ENCODE measurements at regions of chr3 and their contacts with region 1.

Region 1: GRCh38 chr3:50611464-50612233 is at the start of gene CISH:
- DNase-seq: peak; percentile 86 to 90 (median 88)
- H3K4me3 ChIP-seq: peak within 1 kb of the TSS; percentile 66 to 93 (median 82)
- H3K4me3 Mint-ChIP-seq: peak within 1 kb of the TSS; percentile 93 to 97
- H3K27ac ChIP-seq: peak within 1 kb of the TSS; percentile 69 to 83
- H3K27ac Mint-ChIP-seq: peak within 1 kb of the TSS; percentile 83 to 96 (median 92)
- H3K4me1 ChIP-seq: peaks cover 72 to 86% of the 10 kb centered on the region in 2 donors
- H3K4me1 Mint-ChIP-seq: peaks cover 78% of the 10 kb centered on the region
- H3K27me3 ChIP-seq: no peaks in the 10 kb centered on the region
- H3K27me3 Mint-ChIP-seq: peaks cover 0 to 4% (median 0%) of the 10 kb centered on the region in 3 donors
- CTCF ChIP-seq: no peak
- polyA plus RNA-seq, gene CISH: 2.9 to 20.1 (median 6.2) TPM

Region 2: GRCh38 chr3:50350527-50351322 is 260.9 kb before region 1 on chr3 and contains the starts of genes CYB561D2 and NPRL2:
- intact Hi-C with region 1: loop called (anchors 5 kb)
- DNase-seq: peak; percentile 95 to 97 (median 96)
- H3K4me3 ChIP-seq: peak within 1 kb of the TSS; percentile 79 to 93 (median 85)
- H3K4me3 Mint-ChIP-seq: peak within 1 kb of the TSS; percentile 92 to 95
- H3K27ac ChIP-seq: peak within 1 kb of the TSS; percentile 85 to 94
- H3K27ac Mint-ChIP-seq: peak within 1 kb of the TSS; percentile 95 to 99 (median 97)
- H3K4me1 ChIP-seq: peaks cover 42 to 58% of the 10 kb centered on the region in 2 donors
- H3K4me1 Mint-ChIP-seq: peaks cover 59% of the 10 kb centered on the region
- H3K27me3 ChIP-seq: no peaks in the 10 kb centered on the region
- H3K27me3 Mint-ChIP-seq: no peaks in the 10 kb centered on the region
- CTCF ChIP-seq: no peak
- polyA plus RNA-seq, gene CYB561D2: 78.9 to 94.0 (median 82.5) TPM
- polyA plus RNA-seq, gene NPRL2: 20.9 to 37.9 (median 23.5) TPM

Region 3: DNA sequence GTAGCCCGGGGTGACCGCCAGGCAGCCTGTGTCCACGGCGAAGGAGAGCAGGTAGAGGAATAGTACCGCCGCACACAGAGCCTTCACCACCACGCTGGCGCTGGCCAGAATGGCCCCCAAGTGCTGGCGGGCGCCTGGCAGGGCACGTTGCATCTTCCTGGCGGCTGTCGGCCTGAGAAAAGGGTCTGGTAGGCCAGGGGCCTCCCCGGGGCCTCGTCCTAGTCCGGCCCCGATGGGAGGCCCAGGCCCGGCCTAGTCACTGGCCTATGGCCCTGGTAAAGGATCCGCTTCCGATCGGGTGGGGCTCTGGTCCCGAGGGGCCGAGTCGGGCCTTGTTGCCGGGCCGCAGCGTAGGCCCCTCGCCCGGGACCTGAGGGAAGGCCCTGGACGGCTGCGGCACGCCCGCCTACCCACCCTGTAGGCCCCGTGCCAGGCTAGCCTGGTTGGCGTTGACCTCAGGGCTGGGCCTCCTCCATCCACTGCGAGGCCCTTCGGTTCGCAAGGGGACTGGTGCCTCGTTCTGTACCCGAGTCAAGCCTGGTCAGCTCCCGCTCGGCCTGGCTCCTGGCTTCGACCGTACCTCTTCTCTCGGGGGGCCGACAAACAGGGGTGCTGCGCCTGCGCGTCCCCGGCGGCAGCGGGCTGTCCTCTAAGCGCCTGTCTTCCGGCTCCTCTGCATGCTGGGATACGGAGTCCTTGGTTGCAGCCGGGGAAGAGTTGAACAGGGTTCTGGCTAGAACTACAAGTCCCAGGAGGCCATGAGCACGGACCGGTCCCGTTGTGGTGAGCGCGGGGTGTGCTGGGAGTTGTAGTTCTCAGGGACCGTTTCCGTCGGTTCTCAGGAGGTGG is 252.5 kb before region 1 on chr3 and contains the start of gene TMEM115:
- intact Hi-C with region 1: loop called (anchors 5 kb)
- DNase-seq: peak; percentile 94 to 97 (median 96)
- H3K4me3 ChIP-seq: peak within 1 kb of the TSS; percentile 47 to 91 (median 89)
- H3K4me3 Mint-ChIP-seq: peak within 1 kb of the TSS; percentile 90 to 95
- H3K27ac ChIP-seq: peak within 1 kb of the TSS; percentile 57 to 91
- H3K27ac Mint-ChIP-seq: peak within 1 kb of the TSS; percentile 82 to 95 (median 93)
- H3K4me1 ChIP-seq: peaks cover 42 to 45% of the 10 kb centered on the region in 2 donors
- H3K4me1 Mint-ChIP-seq: peaks cover 45% of the 10 kb centered on the region
- H3K27me3 ChIP-seq: peaks cover 0 to 2% of the 10 kb centered on the region in 2 donors
- H3K27me3 Mint-ChIP-seq: peaks cover 0 to 5% (median 1%) of the 10 kb centered on the region in 3 donors
- CTCF ChIP-seq: no peak
- polyA plus RNA-seq, gene TMEM115: 14.5 to 36.2 (median 32.9) TPM

Region 4: DNA sequence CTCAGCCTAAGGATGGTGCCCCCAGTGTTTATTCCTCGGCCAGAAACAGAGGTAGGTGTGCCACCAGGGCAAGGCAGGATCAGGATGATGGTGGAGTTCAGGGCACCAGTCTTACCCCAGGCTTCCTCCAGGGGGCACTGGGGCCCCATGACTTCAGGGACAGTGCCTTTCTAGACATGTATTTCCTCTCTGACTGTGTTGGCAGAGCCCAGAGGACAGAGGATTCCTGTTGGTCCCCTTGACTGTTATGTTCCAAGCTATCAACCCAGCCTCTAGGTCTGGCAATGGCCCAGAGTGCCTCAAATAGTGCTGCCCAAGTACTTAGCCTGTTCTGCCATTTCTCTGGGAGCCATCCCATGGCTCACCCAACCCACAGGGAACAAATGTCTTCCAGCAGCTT is 39.5 kb before region 1 on chr3:
- intact Hi-C with region 1: loop called (anchors 1 kb)
- DNase-seq: peak; percentile 71 to 81 (median 75)
- H3K4me3 ChIP-seq: no peak overlapping the region
- H3K4me3 Mint-ChIP-seq: no peak overlapping the region
- H3K27ac ChIP-seq: peak overlapping the region in 1 of 2 donors; percentile 14
- H3K27ac Mint-ChIP-seq: peak overlapping the region in 3 of 7 donors; percentile 36 to 73 (median 65)
- H3K4me1 ChIP-seq: peaks cover 24 to 46% of the 10 kb centered on the region in 2 donors
- H3K4me1 Mint-ChIP-seq: peaks cover 38% of the 10 kb centered on the region
- H3K27me3 ChIP-seq: no peaks in the 10 kb centered on the region
- H3K27me3 Mint-ChIP-seq: peaks cover 0 to under 1% (median 0%) of the 10 kb centered on the region in 3 donors
- CTCF ChIP-seq: peak; percentile 95

Region 5: GRCh38 chr3:50587806-50588758 is 23.6 kb before region 1 on chr3:
- intact Hi-C with region 1: loop called in 1 of 2 experiments (anchors 1 kb)
- DNase-seq: peak in 1 of 3 donors; percentile 23
- H3K4me3 ChIP-seq: no peak overlapping the region
- H3K4me3 Mint-ChIP-seq: peak overlapping the region in 1 of 2 donors; percentile 6
- H3K27ac ChIP-seq: no peak overlapping the region
- H3K27ac Mint-ChIP-seq: peak overlapping the region in 4 of 7 donors; percentile 56 to 84 (median 80)
- H3K4me1 ChIP-seq: peaks cover 56 to 63% of the 10 kb centered on the region in 2 donors
- H3K4me1 Mint-ChIP-seq: peaks cover 53% of the 10 kb centered on the region
- H3K27me3 ChIP-seq: no peaks in the 10 kb centered on the region
- H3K27me3 Mint-ChIP-seq: peaks cover 0 to 2% (median 0%) of the 10 kb centered on the region in 3 donors
- CTCF ChIP-seq: no peak

Region 6: GRCh38 chr3:50632450-50632849 is 20.8 kb after region 1 on chr3:
- intact Hi-C with region 1: loop called in 1 of 2 experiments (anchors 2 kb)
- DNase-seq: peak; percentile 57 to 66 (median 62)
- H3K4me3 ChIP-seq: peak overlapping the region in 1 of 3 experiments; percentile 48
- H3K4me3 Mint-ChIP-seq: peak overlapping the region; percentile 57 to 72
- H3K27ac ChIP-seq: peak overlapping the region; percentile 70 to 94
- H3K27ac Mint-ChIP-seq: peak overlapping the region; percentile 88 to 99 (median 94)
- H3K4me1 ChIP-seq: peaks cover 67 to 80% of the 10 kb centered on the region in 2 donors
- H3K4me1 Mint-ChIP-seq: peaks cover 82% of the 10 kb centered on the region
- H3K27me3 ChIP-seq: no peaks in the 10 kb centered on the region
- H3K27me3 Mint-ChIP-seq: no peaks in the 10 kb centered on the region
- CTCF ChIP-seq: peak; percentile 32

Region 7: DNA sequence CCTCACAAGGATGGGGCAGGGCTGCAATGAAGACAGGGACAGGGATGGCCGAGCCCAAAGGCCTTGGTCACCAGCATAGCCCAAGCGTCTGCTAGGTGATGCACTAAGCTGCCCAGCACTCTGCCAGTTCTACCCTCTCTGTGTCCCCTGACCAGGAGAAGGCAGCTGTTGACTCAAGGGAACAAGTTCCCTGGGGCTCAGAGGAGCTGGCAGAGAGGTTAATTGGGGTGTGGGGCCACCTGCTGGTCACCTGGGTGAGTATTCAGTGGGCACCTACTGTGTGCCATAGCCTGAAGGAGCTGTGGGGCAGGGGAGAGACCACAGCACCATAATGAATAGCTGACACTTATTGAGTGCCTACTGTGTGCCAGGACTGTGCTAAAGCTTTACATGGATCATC is 41.1 kb after region 1 on chr3:
- intact Hi-C with region 1: no loop called
- DNase-seq: peak in 2 of 3 donors; percentile 47 to 50
- H3K4me3 ChIP-seq: no peak overlapping the region
- H3K4me3 Mint-ChIP-seq: no peak overlapping the region
- H3K27ac ChIP-seq: no peak overlapping the region
- H3K27ac Mint-ChIP-seq: no peak overlapping the region
- H3K4me1 ChIP-seq: peaks cover 8 to 15% of the 10 kb centered on the region in 2 donors
- H3K4me1 Mint-ChIP-seq: peaks cover 22% of the 10 kb centered on the region
- H3K27me3 ChIP-seq: no peaks in the 10 kb centered on the region
- H3K27me3 Mint-ChIP-seq: peaks cover 0 to 10% (median 2%) of the 10 kb centered on the region in 3 donors
- CTCF ChIP-seq: peak; percentile 50

Region 8: DNA sequence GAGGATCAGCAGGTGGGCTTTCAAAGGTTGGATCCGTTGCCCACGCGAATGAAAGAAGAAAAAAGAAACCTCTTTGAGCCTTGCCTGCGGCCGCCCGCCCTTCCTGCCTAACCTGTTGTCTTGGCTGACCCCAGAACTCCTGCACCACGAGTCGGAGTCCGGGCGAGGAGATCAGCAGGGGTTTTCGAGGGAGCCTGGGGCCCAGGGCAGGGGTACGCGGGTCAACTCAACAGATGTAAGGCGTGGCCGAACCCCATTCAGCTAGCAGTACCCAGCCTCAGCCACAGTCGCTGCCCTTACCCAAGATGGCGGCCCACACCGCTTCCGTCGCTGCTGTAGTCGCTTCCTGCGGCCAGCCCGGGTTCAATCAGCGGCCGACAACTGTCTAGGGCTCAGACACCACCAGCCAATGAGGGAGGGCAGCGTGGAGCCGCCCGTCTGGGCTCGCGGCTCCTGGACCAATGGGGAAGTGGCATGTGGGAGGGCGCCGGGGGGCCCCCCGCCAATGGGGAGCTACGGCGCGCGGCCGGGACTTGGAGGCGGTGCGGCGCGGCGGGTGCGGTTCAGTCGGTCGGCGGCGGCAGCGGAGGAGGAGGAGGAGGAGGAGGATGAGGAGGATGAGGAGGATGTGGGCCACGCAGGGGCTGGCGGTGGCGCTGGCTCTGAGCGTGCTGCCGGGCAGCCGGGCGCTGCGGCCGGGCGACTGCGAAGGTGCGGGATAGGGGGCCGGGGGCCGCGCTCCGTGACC is 773.3 kb after region 1 on chr3 and contains the start of gene MANF:
- intact Hi-C with region 1: loop called in 1 of 2 experiments (anchors 5 kb)
- DNase-seq: peak; percentile 98
- H3K4me3 ChIP-seq: peak within 1 kb of the TSS; percentile 78 to 99 (median 83)
- H3K4me3 Mint-ChIP-seq: peak within 1 kb of the TSS; percentile 96 to 98
- H3K27ac ChIP-seq: peak within 1 kb of the TSS; percentile 64 to 97
- H3K27ac Mint-ChIP-seq: peak within 1 kb of the TSS; percentile 96 to 99 (median 97)
- H3K4me1 ChIP-seq: peaks cover 34 to 44% of the 10 kb centered on the region in 2 donors
- H3K4me1 Mint-ChIP-seq: peaks cover 38% of the 10 kb centered on the region
- H3K27me3 ChIP-seq: no peaks in the 10 kb centered on the region
- H3K27me3 Mint-ChIP-seq: peaks cover 0 to 3% (median 1%) of the 10 kb centered on the region in 3 donors
- CTCF ChIP-seq: no peak
- polyA plus RNA-seq, gene MANF: 14.1 to 30.2 (median 23.6) TPM